ENCODE measurements at regions of chr1 and their contacts with region 1.

Region 1: GRCh38 chr1:84143796-84144565 is at the start of gene PRKACB:
- DNase-seq: peak in 3 of 5 donors; percentile 49 to 68 (median 52)
- H3K4me3 ChIP-seq: peak within 1 kb of the TSS; percentile 65
- H3K4me3 Mint-ChIP-seq: peak within 1 kb of the TSS; percentile 92 to 99 (median 95)
- H3K27ac ChIP-seq: peak within 1 kb of the TSS; percentile 52
- H3K27ac Mint-ChIP-seq: peak within 1 kb of the TSS; percentile 87 to 99 (median 96)
- H3K4me1 ChIP-seq: peaks cover 40% of the 10 kb centered on the region
- H3K4me1 Mint-ChIP-seq: peaks cover 35 to 62% (median 49%) of the 10 kb centered on the region in 3 donors
- H3K27me3 ChIP-seq: no peaks in the 10 kb centered on the region
- H3K27me3 Mint-ChIP-seq: no peaks in the 10 kb centered on the region
- total RNA-seq, gene PRKACB: 47.7 to 54.6 TPM

Region 2: GRCh38 chr1:84202126-84202525 is 58.1 kb after region 1 on chr1:
- CTCF ChIA-PET with region 1: no interaction called
- POLR2A ChIA-PET with region 1: no interaction called
- DNase-seq: no peak
- H3K4me3 ChIP-seq: no peak overlapping the region
- H3K4me3 Mint-ChIP-seq: no peak overlapping the region
- H3K27ac ChIP-seq: no peak overlapping the region
- H3K27ac Mint-ChIP-seq: peak overlapping the region in 4 of 8 donors; percentile 42 to 58 (median 46)
- H3K4me1 ChIP-seq: no peaks in the 10 kb centered on the region
- H3K4me1 Mint-ChIP-seq: peaks cover 20 to 31% (median 22%) of the 10 kb centered on the region in 3 donors
- H3K27me3 ChIP-seq: no peaks in the 10 kb centered on the region
- H3K27me3 Mint-ChIP-seq: no peaks in the 10 kb centered on the region

Region 3: GRCh38 chr1:84433258-84434080 is 289.5 kb after region 1 on chr1:
- CTCF ChIA-PET with region 1: interaction called, 34 read pairs
- POLR2A ChIA-PET with region 1: interaction called, 20 read pairs
- DNase-seq: peak in 4 of 5 donors; percentile 35 to 81 (median 74)
- H3K4me3 ChIP-seq: peak overlapping the region; percentile 28
- H3K4me3 Mint-ChIP-seq: peak overlapping the region; percentile 61 to 86 (median 73)
- H3K27ac ChIP-seq: peak overlapping the region; percentile 49
- H3K27ac Mint-ChIP-seq: peak overlapping the region in 7 of 8 donors; percentile 76 to 88 (median 83)
- H3K4me1 ChIP-seq: peaks cover 43% of the 10 kb centered on the region
- H3K4me1 Mint-ChIP-seq: peaks cover 0 to 21% (median 9%) of the 10 kb centered on the region in 3 donors
- H3K27me3 ChIP-seq: no peaks in the 10 kb centered on the region
- H3K27me3 Mint-ChIP-seq: peaks cover 0 to under 1% of the 10 kb centered on the region in 2 donors